ENCODE measurements at regions of chr6 and their contacts with region 1.

Region 1: DNA sequence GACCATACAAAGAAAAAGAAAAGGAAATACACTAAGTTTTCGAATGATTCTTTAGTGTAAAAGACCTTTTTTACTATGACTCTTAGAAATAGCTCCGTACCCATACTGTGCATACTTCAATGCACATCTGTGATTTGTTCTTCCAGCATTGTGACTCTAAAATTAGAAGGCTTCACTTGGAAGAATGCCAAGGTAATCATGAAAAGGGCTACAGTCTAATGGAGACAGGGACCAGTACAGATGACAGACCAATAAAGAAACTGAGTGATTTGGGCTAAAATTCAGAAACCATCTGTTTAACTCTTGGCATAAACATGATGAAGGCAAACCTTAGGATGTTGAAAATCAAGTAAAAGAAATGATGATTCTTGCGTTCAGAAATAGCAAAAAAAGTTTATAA is 46.3 kb downstream of the CYP39A1 start:
- DNase-seq: no peak
- H3K4me3 ChIP-seq: no peak overlapping the region
- H3K27ac ChIP-seq: no peak overlapping the region
- H3K4me1 ChIP-seq: no peaks in the 10 kb centered on the region
- H3K27me3 ChIP-seq: peaks cover 2% of the 10 kb centered on the region
- CTCF ChIP-seq: no peak

Region 2: GRCh38 chr6:46437671-46438221 is 168.6 kb before region 1 on chr6:
- CTCF ChIA-PET with region 1: no interaction called
- dilution Hi-C with region 1: no loop called
- in situ Hi-C with region 1: loop called in 1 of 2 experiments (anchors 25 kb)
- intact Hi-C with region 1: no loop called
- DNase-seq: no peak
- H3K4me3 ChIP-seq: no peak overlapping the region
- H3K27ac ChIP-seq: no peak overlapping the region
- H3K4me1 ChIP-seq: no peaks in the 10 kb centered on the region
- H3K27me3 ChIP-seq: no peaks in the 10 kb centered on the region
- CTCF ChIP-seq: no peak